Activated CD4-positive, alpha-beta memory T cell treated with anti-CD3 and anti-CD28 coated beads, Interleukin-2, amount 10 ng/mL, durations not matched to agents 7 days and 5 days (primary cell): ENCODE measurements at regions of chr10 and their contacts with region 1.

Region 1: GRCh38 chr10:80444646-80445319 is 9.3 kb upstream of the TSPAN14 start:
- DNase-seq: peak; percentile 79
- H3K4me3 Mint-ChIP-seq: no peak overlapping the region
- H3K27ac Mint-ChIP-seq: no peak overlapping the region
- H3K4me1 Mint-ChIP-seq: peaks cover 42% of the 10 kb centered on the region
- H3K27me3 Mint-ChIP-seq: no peaks in the 10 kb centered on the region

Region 2: DNA sequence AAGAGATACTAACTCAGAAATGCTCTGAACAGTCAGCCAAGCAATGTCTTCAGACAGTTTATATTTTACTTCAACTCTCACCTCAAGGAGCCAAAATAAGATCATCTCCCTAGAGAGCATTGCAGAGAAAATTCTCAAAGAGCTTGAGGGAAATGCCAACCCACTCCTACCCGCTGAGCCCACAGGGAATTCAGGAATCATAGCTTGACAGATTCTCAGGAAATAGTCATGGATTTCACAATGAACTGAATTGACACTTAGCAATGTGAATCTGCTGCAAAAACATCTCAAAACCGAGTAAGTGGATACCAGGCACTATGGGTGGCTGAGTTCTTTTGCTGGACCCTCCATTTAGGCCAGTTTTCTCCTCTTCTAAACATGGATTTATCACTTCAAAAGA is 322.0 kb before region 1 on chr10:
- CTCF ChIA-PET with region 1: no interaction called
- POLR2A ChIA-PET with region 1: no interaction called
- DNase-seq: no peak
- H3K4me3 Mint-ChIP-seq: no peak overlapping the region
- H3K27ac Mint-ChIP-seq: no peak overlapping the region
- H3K4me1 Mint-ChIP-seq: no peaks in the 10 kb centered on the region
- H3K27me3 Mint-ChIP-seq: peaks cover 38% of the 10 kb centered on the region

Region 3: GRCh38 chr10:80382989-80383388 is 61.8 kb before region 1 on chr10:
- CTCF ChIA-PET with region 1: interaction called, 10 read pairs
- POLR2A ChIA-PET with region 1: no interaction called
- DNase-seq: peak; percentile 53
- H3K4me3 Mint-ChIP-seq: no peak overlapping the region
- H3K27ac Mint-ChIP-seq: no peak overlapping the region
- H3K4me1 Mint-ChIP-seq: peaks cover 12% of the 10 kb centered on the region
- H3K27me3 Mint-ChIP-seq: peaks cover 10% of the 10 kb centered on the region

Region 4: DNA sequence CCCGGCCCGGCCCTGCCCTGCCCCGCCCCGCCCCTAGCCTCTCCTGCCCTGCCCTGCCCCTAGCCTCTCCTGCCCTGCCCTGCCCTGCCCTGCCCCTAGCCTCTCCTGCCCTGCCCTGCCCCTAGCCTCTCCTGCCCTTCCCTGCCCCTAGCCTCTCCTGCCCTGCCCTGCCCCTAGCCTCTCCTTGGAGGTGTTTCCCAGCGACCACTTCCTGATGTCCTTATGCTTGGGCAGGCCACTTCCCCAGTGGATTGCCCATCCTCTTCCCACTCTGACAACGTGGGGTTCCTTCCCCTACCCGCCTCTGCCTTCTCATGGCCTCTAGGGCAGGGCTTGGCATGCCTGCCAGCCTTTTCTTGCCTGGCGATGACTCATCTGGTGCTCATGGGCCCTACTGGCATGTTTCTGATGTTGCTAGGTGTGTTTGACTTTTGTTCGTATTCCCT is 15.2 kb before region 1 on chr10:
- CTCF ChIA-PET with region 1: interaction called, 14 read pairs
- POLR2A ChIA-PET with region 1: no interaction called
- DNase-seq: no peak
- H3K4me3 Mint-ChIP-seq: no peak overlapping the region
- H3K27ac Mint-ChIP-seq: no peak overlapping the region
- H3K4me1 Mint-ChIP-seq: peaks cover 1% of the 10 kb centered on the region
- H3K27me3 Mint-ChIP-seq: no peaks in the 10 kb centered on the region

Region 5: GRCh38 chr10:80472234-80473095 is 27.7 kb after region 1 on chr10:
- CTCF ChIA-PET with region 1: interaction called, 16 read pairs
- POLR2A ChIA-PET with region 1: interaction called, 7 read pairs
- DNase-seq: peak; percentile 50
- H3K4me3 Mint-ChIP-seq: peak overlapping the region; percentile 36
- H3K27ac Mint-ChIP-seq: peak overlapping the region; percentile 83
- H3K4me1 Mint-ChIP-seq: peaks cover 86% of the 10 kb centered on the region
- H3K27me3 Mint-ChIP-seq: no peaks in the 10 kb centered on the region

Region 6: DNA sequence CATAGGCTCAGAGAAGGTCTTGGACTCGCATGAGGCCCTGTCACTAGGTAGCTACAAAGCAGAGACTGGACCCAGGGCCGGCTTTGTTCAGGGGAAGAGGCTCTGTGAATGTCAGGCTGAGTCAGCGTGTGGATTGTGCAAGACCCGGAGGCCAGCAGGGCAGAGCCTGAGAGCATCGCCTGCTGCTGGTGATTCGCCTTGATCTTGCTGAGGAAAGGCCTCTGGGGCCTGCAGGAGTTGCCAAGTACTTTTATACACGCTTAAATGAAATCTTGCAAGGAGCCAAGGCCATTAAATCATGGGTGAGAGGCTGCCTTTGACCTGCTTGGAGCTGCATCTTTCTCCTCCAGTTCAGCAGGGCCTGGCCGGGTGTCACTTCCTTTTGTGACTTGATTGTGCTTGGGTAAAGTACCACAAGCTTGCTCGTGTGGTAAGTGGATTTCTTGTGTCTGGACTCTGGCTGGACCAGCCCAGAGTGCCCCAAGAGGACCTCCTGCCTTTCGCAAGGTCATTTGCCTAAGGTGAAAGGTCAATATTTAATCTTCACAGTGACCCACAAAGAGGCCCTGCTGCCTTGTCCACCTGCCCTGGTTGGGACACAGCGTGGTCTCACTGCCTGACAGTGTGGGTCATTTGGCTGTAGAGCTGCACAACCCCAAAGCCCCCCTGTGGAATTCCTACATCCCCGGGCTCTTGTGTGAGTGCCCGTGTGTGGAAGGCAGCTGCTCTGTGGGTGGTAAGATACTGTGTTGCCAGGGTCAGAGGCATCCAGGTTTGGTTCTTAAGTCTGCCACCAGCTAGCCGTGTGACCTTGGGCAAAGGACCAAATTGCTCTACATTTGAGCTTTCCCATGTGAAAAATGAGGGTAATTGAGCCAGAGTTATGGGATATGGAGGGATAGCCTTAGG is 54.3 kb after region 1 on chr10:
- CTCF ChIA-PET with region 1: interaction called, 318 read pairs
- POLR2A ChIA-PET with region 1: interaction called, 22 read pairs
- DNase-seq: peak; percentile 70
- H3K4me3 Mint-ChIP-seq: peak overlapping the region; percentile 52
- H3K27ac Mint-ChIP-seq: peak overlapping the region; percentile 92
- H3K4me1 Mint-ChIP-seq: peaks cover 97% of the 10 kb centered on the region
- H3K27me3 Mint-ChIP-seq: no peaks in the 10 kb centered on the region

Region 7: GRCh38 chr10:80509403-80510161 is 64.8 kb after region 1 on chr10:
- CTCF ChIA-PET with region 1: interaction called, 318 read pairs
- POLR2A ChIA-PET with region 1: interaction called, 22 read pairs
- DNase-seq: no peak
- H3K4me3 Mint-ChIP-seq: no peak overlapping the region
- H3K27ac Mint-ChIP-seq: peak overlapping the region; percentile 28
- H3K4me1 Mint-ChIP-seq: peaks cover 35% of the 10 kb centered on the region
- H3K27me3 Mint-ChIP-seq: no peaks in the 10 kb centered on the region

Region 8: DNA sequence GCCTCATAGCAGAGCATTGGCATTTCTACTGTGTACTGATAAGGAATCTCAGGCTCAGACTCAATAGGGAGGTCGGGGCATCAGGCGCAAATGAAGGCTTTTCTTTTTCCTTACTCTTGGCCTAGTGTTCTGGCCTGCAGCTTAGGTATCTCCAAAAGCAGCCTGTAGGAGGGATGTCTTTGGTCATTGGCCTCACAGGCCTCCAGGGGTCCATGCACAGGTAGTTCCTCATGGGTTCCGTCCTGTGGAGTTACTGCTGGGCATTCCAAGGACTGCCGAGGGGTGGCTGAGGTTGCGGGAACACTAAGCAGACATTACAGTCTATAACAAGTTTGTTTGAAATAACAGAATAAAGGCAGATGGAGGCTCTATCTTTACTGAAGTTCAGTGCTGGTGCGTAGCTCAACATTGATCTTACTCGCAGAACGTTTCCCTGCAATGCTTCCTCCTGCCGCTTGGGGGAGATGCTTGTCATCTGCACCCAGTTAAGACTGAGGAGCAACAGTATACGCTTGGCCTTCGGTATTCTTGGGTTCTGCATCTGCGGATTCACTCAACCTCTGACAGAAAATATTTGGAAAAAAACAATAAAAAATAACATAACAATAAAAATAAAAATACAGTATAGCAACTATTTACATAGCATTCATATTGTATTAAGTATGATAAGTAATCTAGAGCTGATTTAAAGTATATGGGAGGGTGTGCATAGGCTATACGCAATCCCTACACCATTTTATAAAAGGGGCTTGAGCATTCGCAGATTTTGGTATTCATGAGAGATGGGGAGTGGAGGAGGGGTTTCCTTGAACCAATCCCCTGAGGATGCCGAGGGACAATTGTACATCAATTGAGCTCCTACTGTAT is 151.8 kb after region 1 on chr10:
- CTCF ChIA-PET with region 1: interaction called, 11 read pairs
- POLR2A ChIA-PET with region 1: no interaction called
- DNase-seq: peak; percentile 38
- H3K4me3 Mint-ChIP-seq: no peak overlapping the region
- H3K27ac Mint-ChIP-seq: no peak overlapping the region
- H3K4me1 Mint-ChIP-seq: no peaks in the 10 kb centered on the region
- H3K27me3 Mint-ChIP-seq: no peaks in the 10 kb centered on the region

Region 9: GRCh38 chr10:80686734-80687475 is 242.1 kb after region 1 on chr10:
- CTCF ChIA-PET with region 1: no interaction called
- POLR2A ChIA-PET with region 1: no interaction called
- DNase-seq: no peak
- H3K4me3 Mint-ChIP-seq: no peak overlapping the region
- H3K27ac Mint-ChIP-seq: no peak overlapping the region
- H3K4me1 Mint-ChIP-seq: no peaks in the 10 kb centered on the region
- H3K27me3 Mint-ChIP-seq: peaks cover 17% of the 10 kb centered on the region